Activated naive CD4-positive, alpha-beta T cell treated with anti-CD3 and anti-CD28 coated beads for 36 hours (primary cell): ENCODE measurements at regions of chr5 and their contacts with region 1.

Region 1: DNA sequence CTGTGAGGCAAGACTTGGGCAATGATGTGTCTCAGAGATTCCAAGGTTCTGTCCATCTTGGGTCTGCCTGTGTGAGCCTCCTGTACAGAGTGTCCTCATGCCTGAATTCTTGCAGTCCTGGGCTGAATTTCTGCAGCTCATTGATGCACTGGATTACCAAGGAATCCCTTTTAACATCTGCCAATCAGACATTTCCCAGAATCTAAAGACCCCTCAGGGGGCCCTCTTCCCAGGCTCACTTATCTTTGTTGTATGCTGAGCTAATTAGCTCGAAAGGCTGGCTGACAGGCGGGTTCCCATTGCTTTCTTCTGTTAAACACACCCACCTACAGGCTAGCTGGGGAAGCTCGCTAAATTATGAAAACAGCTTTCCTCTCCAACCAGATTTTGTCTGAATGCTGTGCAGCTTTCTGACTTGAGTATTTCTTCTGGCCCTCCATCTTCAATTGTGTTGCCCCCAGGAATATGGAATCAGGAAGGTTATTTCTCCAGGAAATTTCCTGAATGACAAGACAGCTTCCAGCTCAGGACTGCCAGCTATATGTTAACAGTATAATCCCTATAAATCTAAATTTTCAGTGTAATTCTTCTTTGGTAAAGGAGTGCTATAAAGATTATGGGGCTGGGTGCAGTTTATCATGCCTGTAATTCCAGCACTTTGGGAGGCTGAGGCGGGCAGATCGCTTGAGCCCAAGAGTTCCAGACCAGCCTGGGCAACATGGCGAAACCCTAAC is at the start of gene LIX1:
- DNase-seq: peak; percentile 60
- H3K4me3 Mint-ChIP-seq: no peak within 1 kb of the TSS
- H3K27ac Mint-ChIP-seq: no peak within 1 kb of the TSS
- H3K4me1 Mint-ChIP-seq: no peaks in the 10 kb centered on the region
- H3K27me3 Mint-ChIP-seq: peaks cover 6% of the 10 kb centered on the region
- total RNA-seq, gene LIX1: not detected

Region 2: GRCh38 chr5:96963267-96963666 is 179.4 kb before region 1 on chr5:
- CTCF ChIA-PET with region 1: no interaction called
- intact Hi-C with region 1: no loop called
- DNase-seq: peak; percentile 47
- H3K4me3 Mint-ChIP-seq: peak overlapping the region; percentile 69
- H3K27ac Mint-ChIP-seq: peak overlapping the region; percentile 95
- H3K4me1 Mint-ChIP-seq: peaks cover 73% of the 10 kb centered on the region
- H3K27me3 Mint-ChIP-seq: no peaks in the 10 kb centered on the region

Region 3: GRCh38 chr5:96997265-96997859 is 145.3 kb before region 1 on chr5:
- CTCF ChIA-PET with region 1: interaction called, 15 read pairs
- intact Hi-C with region 1: loop called (anchors 1 kb)
- DNase-seq: peak; percentile 33
- H3K4me3 Mint-ChIP-seq: no peak overlapping the region
- H3K27ac Mint-ChIP-seq: no peak overlapping the region
- H3K4me1 Mint-ChIP-seq: peaks cover 23% of the 10 kb centered on the region
- H3K27me3 Mint-ChIP-seq: no peaks in the 10 kb centered on the region

Region 4: DNA sequence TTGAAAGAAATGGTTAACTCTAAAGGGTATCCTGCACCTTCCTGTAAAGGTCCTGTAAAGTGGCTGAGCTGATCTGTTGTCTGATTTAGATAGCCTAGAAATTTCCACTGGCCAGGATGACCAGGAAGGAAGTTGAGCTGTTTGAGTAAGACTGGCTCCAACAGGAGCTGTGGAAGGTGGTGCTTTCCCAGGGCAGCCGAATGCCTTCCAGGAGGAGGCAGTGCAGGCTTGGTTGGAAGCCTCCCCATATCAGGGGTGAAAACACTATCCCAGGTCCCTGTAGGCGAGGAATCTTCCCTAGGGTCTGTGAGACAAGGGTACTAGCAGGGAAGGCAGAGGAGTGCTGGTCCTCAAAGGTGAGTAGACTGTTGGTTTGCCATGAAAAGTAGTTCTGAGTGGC is 98.6 kb before region 1 on chr5:
- CTCF ChIA-PET with region 1: interaction called, 11 read pairs
- intact Hi-C with region 1: loop called (anchors 5 kb)
- DNase-seq: no peak
- H3K4me3 Mint-ChIP-seq: no peak overlapping the region
- H3K27ac Mint-ChIP-seq: no peak overlapping the region
- H3K4me1 Mint-ChIP-seq: no peaks in the 10 kb centered on the region
- H3K27me3 Mint-ChIP-seq: no peaks in the 10 kb centered on the region

Region 5: DNA sequence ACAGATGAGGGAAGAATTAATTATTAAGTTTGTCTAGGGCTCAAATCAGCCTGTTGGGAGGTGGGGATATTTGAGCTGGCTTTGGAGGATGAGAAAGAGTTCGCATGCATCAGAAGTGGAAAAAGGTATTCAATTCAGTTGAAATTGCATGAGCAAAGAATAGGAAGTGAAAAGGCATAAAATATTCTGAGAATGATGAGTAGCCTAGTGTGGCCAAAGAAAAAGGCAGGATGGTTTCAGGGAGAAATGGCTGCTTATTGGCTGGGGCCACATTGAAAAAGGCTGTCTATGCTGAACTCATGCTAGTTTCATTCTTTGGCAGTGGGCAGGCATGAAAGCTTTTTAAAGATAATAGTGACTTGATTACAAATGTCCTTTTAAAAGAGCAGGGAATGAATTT is 275.8 kb after region 1 on chr5:
- CTCF ChIA-PET with region 1: no interaction called
- intact Hi-C with region 1: no loop called
- DNase-seq: no peak
- H3K4me3 Mint-ChIP-seq: no peak overlapping the region
- H3K27ac Mint-ChIP-seq: no peak overlapping the region
- H3K4me1 Mint-ChIP-seq: no peaks in the 10 kb centered on the region
- H3K27me3 Mint-ChIP-seq: no peaks in the 10 kb centered on the region

Region 6: GRCh38 chr5:97788369-97788768 is 645.7 kb after region 1 on chr5:
- CTCF ChIA-PET with region 1: no interaction called
- intact Hi-C with region 1: no loop called
- DNase-seq: no peak
- H3K4me3 Mint-ChIP-seq: no peak overlapping the region
- H3K27ac Mint-ChIP-seq: no peak overlapping the region
- H3K4me1 Mint-ChIP-seq: no peaks in the 10 kb centered on the region
- H3K27me3 Mint-ChIP-seq: no peaks in the 10 kb centered on the region